ENCODE measurements at regions of chr11 and their contacts with region 1.

Region 1: GRCh38 chr11:77047007-77047927 is 13.1 kb downstream of the B3GNT6 start:
- DNase-seq: no peak
- ATAC-seq: peak; percentile 91
- H3K4me3 Mint-ChIP-seq: peak overlapping the region; percentile 71
- H3K27ac Mint-ChIP-seq: peak overlapping the region; percentile 64
- H3K4me1 Mint-ChIP-seq: peaks cover 12% of the 10 kb centered on the region
- H3K27me3 Mint-ChIP-seq: peaks cover 22% of the 10 kb centered on the region
- CTCF ChIP-seq: no peak

Region 2: DNA sequence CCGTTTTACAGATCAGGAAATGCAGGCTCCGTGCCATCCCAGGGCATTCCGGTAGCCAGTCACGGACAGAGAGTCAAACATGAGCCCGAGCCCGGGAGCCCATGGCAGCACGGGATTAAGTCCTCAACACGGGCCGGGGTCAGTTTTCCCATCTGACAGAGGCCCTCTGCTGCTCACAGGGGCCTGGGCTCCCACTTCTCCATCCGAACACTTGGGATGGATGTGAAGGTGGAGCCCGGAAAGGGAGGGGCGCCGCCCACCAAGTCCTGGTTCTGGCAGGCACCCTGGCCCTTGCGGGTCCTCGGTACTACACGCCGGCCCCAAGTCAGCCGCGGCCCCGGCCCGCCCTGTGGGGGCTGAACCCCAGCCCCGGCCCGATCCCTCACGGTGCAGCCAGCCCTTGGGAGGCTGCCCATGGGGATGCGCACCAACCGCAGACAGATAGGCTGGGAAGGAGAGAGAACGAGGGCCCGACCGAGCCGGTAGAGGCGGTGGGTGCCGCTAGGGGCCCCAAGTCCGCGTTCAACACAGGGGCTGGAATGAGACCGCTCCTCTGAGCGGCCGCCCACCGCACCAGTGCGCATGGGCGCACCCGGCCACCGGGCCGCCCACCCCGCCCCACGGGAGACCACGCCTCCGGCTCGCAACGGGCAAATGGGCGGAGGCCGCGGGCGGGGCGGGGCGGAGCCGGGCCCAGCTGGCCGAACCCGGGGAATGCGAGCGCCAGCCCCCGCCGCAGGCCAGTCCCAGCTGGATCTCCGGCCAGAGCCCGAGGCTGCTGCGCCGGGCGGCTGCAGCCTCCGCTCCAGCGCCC is 19.2 kb after region 1 on chr11 and contains the start of gene CAPN5:
- CTCF ChIA-PET with region 1: interaction called, 3 read pairs
- POLR2A ChIA-PET with region 1: interaction called, 11 read pairs
- intact Hi-C with region 1: loop called (anchors 1 kb)
- DNase-seq: peak; percentile 93
- ATAC-seq: peak; percentile 95
- H3K4me3 Mint-ChIP-seq: peak within 1 kb of the TSS; percentile 85
- H3K27ac Mint-ChIP-seq: peak within 1 kb of the TSS; percentile 54
- H3K4me1 Mint-ChIP-seq: peaks cover 10% of the 10 kb centered on the region
- H3K27me3 Mint-ChIP-seq: no peaks in the 10 kb centered on the region
- CTCF ChIP-seq: no peak
- total RNA-seq, gene CAPN5: 0.44 and 0.71 TPM in 2 replicates

Region 3: GRCh38 chr11:77187776-77188632 is 140.7 kb after region 1 on chr11:
- CTCF ChIA-PET with region 1: no interaction called
- POLR2A ChIA-PET with region 1: no interaction called
- intact Hi-C with region 1: loop called (anchors 1 kb)
- DNase-seq: peak; percentile 35
- ATAC-seq: peak; percentile 54
- H3K4me3 Mint-ChIP-seq: no peak overlapping the region
- H3K27ac Mint-ChIP-seq: no peak overlapping the region
- H3K4me1 Mint-ChIP-seq: no peaks in the 10 kb centered on the region
- H3K27me3 Mint-ChIP-seq: no peaks in the 10 kb centered on the region
- CTCF ChIP-seq: peak; percentile 41

Region 4: GRCh38 chr11:77619576-77620198 is 572.4 kb after region 1 on chr11:
- CTCF ChIA-PET with region 1: interaction called, 3 read pairs
- POLR2A ChIA-PET with region 1: interaction called, 3 read pairs
- intact Hi-C with region 1: loop called (anchors 2 kb)
- DNase-seq: no peak
- ATAC-seq: no peak
- H3K4me3 Mint-ChIP-seq: no peak overlapping the region
- H3K27ac Mint-ChIP-seq: no peak overlapping the region
- H3K4me1 Mint-ChIP-seq: no peaks in the 10 kb centered on the region
- H3K27me3 Mint-ChIP-seq: no peaks in the 10 kb centered on the region
- CTCF ChIP-seq: no peak

Region 5: DNA sequence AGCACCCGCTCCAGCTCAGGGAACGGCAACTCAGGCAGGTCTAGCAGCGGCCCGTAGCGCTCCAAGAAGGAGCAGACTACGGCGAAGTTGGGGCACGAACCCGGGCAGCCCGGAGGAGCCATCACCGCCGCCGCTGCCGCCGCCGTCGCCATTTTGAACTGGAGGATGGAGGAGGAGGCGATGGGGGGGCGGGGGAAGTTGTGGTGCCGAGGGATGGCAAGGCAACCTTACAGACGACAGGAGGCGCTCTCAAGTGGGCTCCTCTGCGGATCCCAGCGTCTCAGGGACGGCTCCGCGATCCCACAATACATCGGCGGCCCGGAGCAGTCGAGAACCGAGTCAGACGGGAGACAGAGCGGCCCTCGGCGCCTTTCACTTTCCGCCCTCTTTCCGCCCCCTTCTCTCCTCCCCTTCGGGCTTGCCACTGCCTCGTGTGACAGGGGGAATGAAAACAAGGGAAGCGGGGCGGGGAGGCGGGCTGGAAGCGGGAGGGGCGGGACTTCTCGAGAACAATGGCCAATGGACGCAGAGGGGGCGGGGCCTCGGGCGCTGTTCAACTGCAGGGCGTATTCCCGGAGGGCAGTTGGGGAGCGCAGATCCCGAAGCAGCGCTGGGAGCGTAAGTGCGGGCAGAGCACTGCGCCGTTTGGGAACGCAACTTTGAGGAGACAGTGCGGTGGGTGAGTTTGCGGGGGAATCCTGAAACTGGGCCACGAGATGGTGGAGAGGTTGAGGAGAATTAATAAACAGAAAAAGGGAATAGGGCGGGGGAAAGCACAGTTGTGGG is 773.5 kb after region 1 on chr11 and contains the starts of genes AAMDC and RSF1:
- CTCF ChIA-PET with region 1: no interaction called
- POLR2A ChIA-PET with region 1: no interaction called
- intact Hi-C with region 1: loop called (anchors 10 kb)
- DNase-seq: peak; percentile 85
- ATAC-seq: peak; percentile 82
- H3K4me3 Mint-ChIP-seq: peak within 1 kb of the TSS; percentile 97
- H3K27ac Mint-ChIP-seq: peak within 1 kb of the TSS; percentile 93
- H3K4me1 Mint-ChIP-seq: peaks cover 36% of the 10 kb centered on the region
- H3K27me3 Mint-ChIP-seq: no peaks in the 10 kb centered on the region
- CTCF ChIP-seq: no peak
- total RNA-seq, gene AAMDC: 3.8 and 4.4 TPM in 2 replicates
- total RNA-seq, gene RSF1: 65.9 and 68.8 TPM in 2 replicates